ENCODE measurements at regions of chr22 and their contacts with region 1.

Region 1: DNA sequence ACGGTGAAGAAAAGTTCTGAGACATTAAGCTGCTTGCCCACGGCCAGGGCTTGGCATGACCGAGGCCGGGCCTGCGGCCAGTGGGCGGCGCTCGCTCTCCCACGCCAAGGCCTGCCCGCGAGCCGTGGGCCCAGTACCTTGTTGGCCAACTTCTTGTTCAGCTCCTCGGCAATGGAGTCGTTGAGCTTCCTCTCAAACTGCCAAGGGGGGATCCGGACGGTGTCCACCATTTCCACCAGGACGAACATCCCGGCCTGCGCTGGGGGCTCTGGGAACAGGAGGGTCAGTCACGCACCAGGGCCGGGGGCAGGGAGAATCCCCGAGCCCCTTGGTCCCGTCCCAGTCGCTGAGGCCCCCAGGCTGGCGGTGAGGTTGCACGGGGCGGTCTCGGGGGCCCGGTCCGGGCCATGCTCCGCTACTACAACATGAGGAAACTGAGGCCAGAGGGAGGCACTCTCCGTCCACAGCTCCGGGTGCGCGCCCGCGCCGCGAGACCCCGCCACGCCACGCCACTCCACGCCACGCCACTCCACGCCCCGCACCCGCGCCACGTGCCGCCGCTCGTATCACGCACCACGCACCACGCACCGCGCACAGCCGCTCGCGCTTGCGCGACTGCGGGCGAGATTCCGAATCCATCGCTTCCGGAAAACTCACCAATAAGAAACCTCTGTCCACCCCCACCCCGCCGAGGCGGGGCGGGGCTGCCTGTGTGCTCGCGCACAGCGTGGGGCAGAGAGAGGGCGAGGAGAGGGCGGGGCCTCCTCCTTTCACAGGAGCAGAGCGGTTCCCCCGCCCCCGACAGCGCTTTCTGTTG is at the start of gene POLR3H:
- DNase-seq: peak; percentile 98
- H3K4me3 Mint-ChIP-seq: peak within 1 kb of the TSS; percentile 97
- H3K27ac Mint-ChIP-seq: peak within 1 kb of the TSS; percentile 89
- H3K4me1 Mint-ChIP-seq: peaks cover 45% of the 10 kb centered on the region
- H3K27me3 Mint-ChIP-seq: no peaks in the 10 kb centered on the region
- total RNA-seq, gene POLR3H: 23.3 to 23.8 TPM

Region 2: DNA sequence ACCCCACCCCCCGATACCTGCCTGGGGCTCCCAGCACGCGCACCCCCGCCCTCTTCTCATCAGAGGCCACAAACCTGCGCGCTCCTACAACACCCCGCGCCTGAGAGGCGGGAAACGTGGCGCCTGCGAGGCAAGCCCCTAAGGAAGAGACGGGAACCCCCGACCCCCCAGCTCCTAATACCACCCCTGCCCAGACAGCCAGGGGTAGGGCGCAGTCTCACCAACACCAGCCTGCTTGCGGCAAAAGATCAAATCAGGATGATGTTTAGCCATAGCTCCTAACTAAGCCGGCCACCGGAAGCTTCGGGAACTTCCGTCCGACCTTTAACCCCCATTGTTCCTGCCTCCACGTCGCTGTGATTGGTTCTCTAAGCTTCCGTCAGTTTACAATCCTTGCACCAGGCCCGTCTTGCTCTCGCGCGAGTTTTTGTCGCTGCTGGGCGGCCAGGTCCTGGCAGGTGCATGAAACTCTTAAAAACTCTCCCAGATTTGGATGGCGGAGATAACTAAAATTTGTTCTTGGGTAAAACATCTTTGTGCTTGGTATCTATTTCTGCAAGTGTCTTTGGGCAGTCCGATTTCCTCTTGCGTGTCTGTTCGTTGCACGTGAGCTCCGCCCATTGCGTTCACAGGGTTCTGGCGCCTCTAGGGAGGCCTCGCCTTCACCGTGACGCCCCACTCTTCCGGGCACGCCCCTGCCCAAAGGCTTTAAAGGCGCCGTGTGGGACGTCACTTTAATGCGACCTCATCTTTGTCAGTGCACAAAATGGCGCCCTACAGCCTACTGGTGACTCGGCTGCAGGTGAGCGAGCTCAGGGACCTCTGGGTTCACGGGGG is 75.5 kb before region 1 on chr22 and contains the starts of genes ACO2 and PHF5A:
- CTCF ChIA-PET with region 1: no interaction called
- POLR2A ChIA-PET with region 1: no interaction called
- intact Hi-C with region 1: loop called (anchors 1 kb)
- DNase-seq: peak; percentile 99
- H3K4me3 Mint-ChIP-seq: peak within 1 kb of the TSS; percentile 93
- H3K27ac Mint-ChIP-seq: peak within 1 kb of the TSS; percentile 99
- H3K4me1 Mint-ChIP-seq: peaks cover 51% of the 10 kb centered on the region
- H3K27me3 Mint-ChIP-seq: no peaks in the 10 kb centered on the region
- total RNA-seq, gene ACO2: 103 to 105 TPM
- total RNA-seq, gene PHF5A: 55.4 to 60.0 TPM

Region 3: DNA sequence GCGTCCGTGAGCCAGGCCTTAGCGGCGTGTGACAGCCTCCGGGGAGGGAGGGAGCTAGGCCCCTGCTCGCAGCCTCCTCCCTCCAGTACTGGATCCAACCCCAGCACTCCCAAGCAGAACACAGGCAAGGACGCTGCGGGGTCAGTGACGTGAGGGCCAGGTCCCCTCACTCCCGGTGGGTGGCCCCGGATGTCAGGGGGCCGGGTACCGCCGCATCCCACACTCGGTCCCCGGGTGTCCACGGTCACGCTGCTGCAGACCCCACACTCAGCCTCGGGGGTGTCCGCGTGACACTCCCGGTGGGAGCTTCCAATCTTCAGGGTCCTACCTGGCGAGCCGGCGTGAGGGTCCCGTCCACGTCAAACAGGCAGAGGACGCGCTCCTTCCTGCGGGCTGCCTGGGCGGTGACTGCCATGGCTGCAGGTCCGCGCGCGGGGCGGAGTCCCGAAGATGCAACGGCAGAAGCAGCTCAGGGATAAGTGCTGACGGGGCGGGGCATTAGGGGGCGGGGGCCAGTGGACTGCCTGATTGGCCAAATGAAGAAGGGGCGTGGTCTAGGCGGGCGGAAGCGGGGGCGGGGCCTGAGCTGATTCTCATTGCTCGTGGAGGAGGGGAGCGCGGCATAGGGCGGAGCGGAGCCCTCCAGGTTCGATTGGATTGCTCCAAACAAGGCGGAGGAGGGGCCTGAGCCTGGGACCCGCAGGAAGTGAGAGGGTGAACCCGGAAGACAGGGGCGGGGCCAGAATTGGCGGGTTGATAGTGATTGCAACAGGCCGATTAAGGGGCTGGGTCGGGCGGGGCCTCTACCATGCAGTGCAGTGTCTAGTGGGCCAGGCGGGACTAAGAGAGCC is 45.6 kb after region 1 on chr22 and contains the start of gene PMM1:
- CTCF ChIA-PET with region 1: interaction called, 6 read pairs
- POLR2A ChIA-PET with region 1: interaction called, 4 read pairs
- intact Hi-C with region 1: loop called (anchors 1 kb)
- DNase-seq: peak; percentile 100
- H3K4me3 Mint-ChIP-seq: peak within 1 kb of the TSS; percentile 94
- H3K27ac Mint-ChIP-seq: peak within 1 kb of the TSS; percentile 81
- H3K4me1 Mint-ChIP-seq: peaks cover 12% of the 10 kb centered on the region
- H3K27me3 Mint-ChIP-seq: no peaks in the 10 kb centered on the region
- total RNA-seq, gene PMM1: 45.1 to 46.4 TPM

Measured in activated CD4-positive, alpha-beta memory T cell treated with anti-CD3 and anti-CD28 coated beads for 36 hours (primary cell).